ENCODE measurements at regions of chr9 and their contacts with region 1.

Region 1: DNA sequence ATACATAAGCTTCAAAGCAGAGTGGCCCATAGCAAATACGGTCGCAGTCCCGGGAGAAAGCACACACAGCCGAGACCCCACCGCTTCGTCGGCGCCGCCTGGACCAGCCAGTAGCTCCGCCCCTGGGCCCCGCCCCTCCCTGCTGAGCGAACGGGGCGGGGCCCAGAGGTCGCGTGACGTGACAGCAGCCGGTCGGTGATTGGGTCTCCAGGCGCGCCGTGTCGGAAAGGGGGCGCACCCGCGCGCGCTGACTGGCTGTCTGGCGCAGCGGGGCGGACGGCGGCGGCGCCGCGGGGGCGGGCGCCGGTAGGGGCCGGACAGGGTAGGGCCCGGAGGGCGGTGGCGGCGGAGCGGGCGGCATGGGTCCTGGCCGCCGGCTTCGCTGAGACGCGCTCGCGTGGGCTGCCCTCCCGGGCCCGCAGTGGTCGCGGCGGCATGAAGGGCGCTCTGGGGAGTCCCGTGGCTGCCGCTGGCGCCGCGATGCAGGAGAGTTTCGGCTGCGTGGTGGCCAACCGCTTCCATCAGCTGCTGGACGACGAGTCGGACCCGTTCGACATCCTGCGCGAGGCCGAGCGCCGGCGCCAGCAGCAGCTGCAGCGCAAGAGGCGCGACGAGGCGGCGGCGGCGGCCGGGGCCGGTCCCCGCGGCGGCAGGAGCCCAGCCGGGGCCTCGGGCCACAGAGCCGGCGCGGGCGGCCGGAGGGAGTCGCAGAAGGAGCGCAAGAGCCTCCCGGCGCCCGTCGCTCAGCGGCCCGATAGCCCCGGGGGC is at the start of gene HABP4:
- DNase-seq: peak; percentile 98
- H3K4me3 ChIP-seq: peak within 1 kb of the TSS; percentile 72 to 79 (median 76)
- H3K27ac ChIP-seq: peak within 1 kb of the TSS; percentile 86 to 92 (median 92)
- H3K4me1 ChIP-seq: peaks cover 0 to 20% (median 8%) of the 10 kb centered on the region in 4 donors
- H3K27me3 ChIP-seq: no peaks in the 10 kb centered on the region
- CTCF ChIP-seq: no peak
- EP300 ChIP-seq: no peak
- POLR2A ChIP-seq: no peak
- total RNA-seq, gene HABP4: 12.5 to 23.5 (median 18.6) TPM

Region 2: GRCh38 chr9:96383165-96383942 is 66.7 kb before region 1 on chr9 and contains the start of gene SLC35D2:
- intact Hi-C with region 1: loop called (anchors 1 kb)
- DNase-seq: peak; percentile 75
- H3K4me3 ChIP-seq: peak within 1 kb of the TSS; percentile 77 to 87 (median 80)
- H3K27ac ChIP-seq: peak within 1 kb of the TSS; percentile 86 to 88 (median 86)
- H3K4me1 ChIP-seq: peaks cover 0 to 25% (median 12%) of the 10 kb centered on the region in 4 donors
- H3K27me3 ChIP-seq: no peaks in the 10 kb centered on the region
- CTCF ChIP-seq: no peak
- EP300 ChIP-seq: no peak
- POLR2A ChIP-seq: no peak
- total RNA-seq, gene SLC35D2: 12.9 to 22.4 (median 16.4) TPM

Region 3: DNA sequence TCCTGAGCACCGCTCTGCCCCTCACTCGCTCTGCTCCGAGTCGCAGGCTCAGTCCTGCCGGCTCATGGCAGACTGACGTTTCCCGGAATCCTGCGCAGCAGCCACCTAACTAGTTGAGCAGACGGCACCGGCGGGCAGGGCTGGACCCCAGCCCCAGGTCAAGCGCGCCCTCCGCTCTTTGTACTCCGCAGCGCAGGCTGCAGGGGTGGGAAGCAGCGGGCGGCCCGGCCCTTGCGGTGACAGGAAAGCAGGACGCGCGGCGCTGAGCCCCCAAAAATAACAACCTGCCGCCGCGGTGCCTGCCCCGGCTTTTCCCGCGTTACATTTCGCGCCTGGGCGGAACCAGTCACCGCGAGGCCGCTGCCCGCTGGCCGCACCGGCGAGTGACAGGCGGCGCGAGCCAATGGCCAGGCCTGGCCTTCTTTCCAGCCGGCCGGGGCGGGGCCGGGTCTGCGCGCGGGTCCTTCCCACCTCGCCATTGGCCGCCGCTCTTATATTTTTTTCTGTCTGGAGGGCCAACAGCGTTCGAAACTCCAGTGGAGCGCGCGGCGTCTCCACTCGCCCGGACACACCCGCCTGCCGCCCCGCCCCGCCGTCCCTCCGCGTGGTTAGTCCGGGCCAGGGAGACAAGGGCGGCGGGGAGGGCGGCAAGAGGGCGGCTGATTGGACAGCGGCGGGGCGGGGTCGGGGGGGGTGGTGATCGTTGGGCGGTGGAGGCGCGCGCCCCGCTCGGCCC is 31.8 kb before region 1 on chr9 and contains the start of gene ZNF367:
- intact Hi-C with region 1: loop called (anchors 1 kb)
- DNase-seq: peak; percentile 99
- H3K4me3 ChIP-seq: peak within 1 kb of the TSS; percentile 66 to 92 (median 82)
- H3K27ac ChIP-seq: peak within 1 kb of the TSS; percentile 98 to 100 (median 98)
- H3K4me1 ChIP-seq: peaks cover 0 to 37% (median 28%) of the 10 kb centered on the region in 4 donors
- H3K27me3 ChIP-seq: no peaks in the 10 kb centered on the region
- CTCF ChIP-seq: no peak
- EP300 ChIP-seq: no peak
- POLR2A ChIP-seq: no peak
- total RNA-seq, gene ZNF367: 0.28 to 1.4 (median 1.3) TPM

Region 4: GRCh38 chr9:96566498-96567207 is 116.6 kb after region 1 on chr9:
- intact Hi-C with region 1: loop called (anchors 5 kb)
- DNase-seq: peak; percentile 88
- H3K4me3 ChIP-seq: peak overlapping the region; percentile 55 to 83 (median 78)
- H3K27ac ChIP-seq: peak overlapping the region; percentile 86 to 90 (median 88)
- H3K4me1 ChIP-seq: peaks cover 0 to 24% (median 11%) of the 10 kb centered on the region in 4 donors
- H3K27me3 ChIP-seq: no peaks in the 10 kb centered on the region
- CTCF ChIP-seq: peak; percentile 31 to 63 (median 44)
- EP300 ChIP-seq: no peak
- POLR2A ChIP-seq: no peak

Region 5: DNA sequence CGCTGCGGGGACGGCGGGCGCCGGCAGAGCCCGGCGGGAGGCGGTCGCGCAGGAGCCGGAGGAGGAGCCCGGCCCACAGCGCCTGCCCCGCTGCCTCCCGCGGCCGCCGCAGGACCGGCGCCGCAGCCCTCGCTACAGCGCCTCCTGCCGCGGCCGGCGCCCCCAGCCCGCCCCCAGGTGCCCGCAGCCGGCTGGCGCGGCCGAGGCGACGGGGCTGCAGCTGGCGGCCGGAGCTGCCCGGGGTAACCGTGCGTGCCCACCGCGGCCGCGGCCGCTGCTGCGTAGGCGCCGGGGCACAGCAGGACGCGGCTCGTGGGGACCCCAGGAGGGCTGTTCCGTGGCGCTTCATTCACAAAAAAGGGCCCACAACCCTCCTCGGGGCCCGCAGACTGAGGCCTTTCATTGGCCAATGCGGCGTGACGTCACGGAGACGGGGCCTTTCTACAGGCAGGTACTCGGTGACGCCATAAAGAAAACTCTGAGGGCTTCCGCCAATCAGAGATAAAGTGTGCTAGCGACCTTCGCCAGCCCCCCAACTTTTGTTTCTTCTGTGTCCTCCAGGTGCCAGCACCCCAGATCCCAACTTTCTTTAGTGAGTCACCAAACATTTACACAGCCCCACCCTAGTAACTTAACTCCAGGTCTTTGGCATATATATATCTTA is 169.6 kb after region 1 on chr9 and contains the start of gene CDC14B:
- intact Hi-C with region 1: loop called (anchors 5 kb)
- DNase-seq: peak; percentile 96
- H3K4me3 ChIP-seq: peak within 1 kb of the TSS; percentile 45 to 92 (median 77)
- H3K27ac ChIP-seq: peak within 1 kb of the TSS; percentile 75 to 90 (median 82)
- H3K4me1 ChIP-seq: peaks cover 0 to 15% (median 6%) of the 10 kb centered on the region in 4 donors
- H3K27me3 ChIP-seq: no peaks in the 10 kb centered on the region
- CTCF ChIP-seq: no peak
- EP300 ChIP-seq: no peak
- POLR2A ChIP-seq: no peak
- total RNA-seq, gene CDC14B: 12.5 to 35.7 (median 17.6) TPM